ENCODE measurements at regions of chr10 and their contacts with region 1.

Region 1: DNA sequence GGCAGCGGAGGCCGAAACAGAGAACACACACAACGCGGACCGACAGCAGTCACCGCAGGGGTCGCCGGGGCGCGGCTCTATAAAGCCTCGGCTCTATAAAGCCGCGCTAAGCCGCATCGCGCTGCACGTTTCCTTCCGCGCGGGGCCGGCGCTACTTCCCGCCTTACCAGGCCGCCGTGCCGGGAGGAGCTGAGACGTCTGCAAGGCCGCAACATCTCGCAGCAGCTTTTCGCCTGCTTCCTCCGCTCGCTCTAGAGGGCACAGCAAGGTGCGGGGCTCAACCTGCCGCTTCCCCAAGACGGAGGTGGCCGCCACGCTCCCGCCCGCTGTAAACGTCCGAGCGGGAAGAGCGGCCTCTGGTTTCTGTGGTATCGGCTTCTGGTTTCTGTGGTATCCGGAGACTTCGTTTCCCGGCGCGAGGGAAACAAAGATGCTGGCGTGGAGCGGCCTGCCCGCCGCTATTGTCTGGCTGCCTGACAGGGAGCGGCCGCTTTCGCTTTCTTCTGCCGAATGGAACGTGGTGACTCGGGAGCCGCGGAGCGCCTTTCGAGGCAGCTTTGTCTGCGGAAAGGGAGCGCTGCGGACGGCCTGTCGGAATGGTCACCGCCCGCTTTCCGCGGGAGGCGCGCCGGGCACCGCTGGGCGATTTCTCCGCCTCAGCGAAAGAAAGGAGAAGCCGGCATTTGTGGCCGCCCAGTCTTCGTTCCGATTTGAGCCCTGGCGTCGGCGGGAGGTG is 91.8 kb downstream of the SPAG6 start:
- DNase-seq: peak; percentile 84 to 96 (median 90)
- ATAC-seq: peak; percentile 85
- H3K4me3 ChIP-seq: peak overlapping the region; percentile 92
- H3K4me3 Mint-ChIP-seq: peak overlapping the region; percentile 98
- H3K27ac ChIP-seq: peak overlapping the region; percentile 90 to 94
- H3K27ac Mint-ChIP-seq: peak overlapping the region; percentile 100
- H3K4me1 ChIP-seq: peaks cover 24% of the 10 kb centered on the region
- H3K4me1 Mint-ChIP-seq: peaks cover 43% of the 10 kb centered on the region
- H3K27me3 ChIP-seq: no peaks in the 10 kb centered on the region
- H3K27me3 Mint-ChIP-seq: no peaks in the 10 kb centered on the region
- CTCF ChIP-seq: peak; percentile 11

Region 2: GRCh38 chr10:21989453-21990154 is 447.4 kb before region 1 on chr10:
- CTCF ChIA-PET with region 1: no interaction called
- POLR2A ChIA-PET with region 1: interaction called, 10 read pairs
- intact Hi-C with region 1: no loop called
- DNase-seq: peak in 9 of 14 experiments; percentile 3 to 67 (median 19)
- ATAC-seq: peak; percentile 87
- H3K4me3 ChIP-seq: no peak overlapping the region
- H3K4me3 Mint-ChIP-seq: no peak overlapping the region
- H3K27ac ChIP-seq: no peak overlapping the region
- H3K27ac Mint-ChIP-seq: no peak overlapping the region
- H3K4me1 ChIP-seq: peaks cover 3% of the 10 kb centered on the region
- H3K4me1 Mint-ChIP-seq: peaks cover 10% of the 10 kb centered on the region
- H3K27me3 ChIP-seq: no peaks in the 10 kb centered on the region
- H3K27me3 Mint-ChIP-seq: no peaks in the 10 kb centered on the region
- CTCF ChIP-seq: peak; percentile 57

Region 3: GRCh38 chr10:22251751-22252223 is 185.3 kb before region 1 on chr10:
- CTCF ChIA-PET with region 1: interaction called, 3 read pairs
- POLR2A ChIA-PET with region 1: interaction called, 50 read pairs
- intact Hi-C with region 1: loop called in 1 of 2 experiments (anchors 1 kb)
- DNase-seq: peak; percentile 46 to 82 (median 66)
- ATAC-seq: peak; percentile 57
- H3K4me3 ChIP-seq: peak overlapping the region; percentile 76
- H3K4me3 Mint-ChIP-seq: peak overlapping the region; percentile 96
- H3K27ac ChIP-seq: peak overlapping the region; percentile 71 to 76
- H3K27ac Mint-ChIP-seq: peak overlapping the region; percentile 97
- H3K4me1 ChIP-seq: peaks cover 10% of the 10 kb centered on the region
- H3K4me1 Mint-ChIP-seq: peaks cover 56% of the 10 kb centered on the region
- H3K27me3 ChIP-seq: peaks cover 0 to 7% of the 10 kb centered on the region in 2 experiments
- H3K27me3 Mint-ChIP-seq: peaks cover 22% of the 10 kb centered on the region
- CTCF ChIP-seq: no peak

Region 4: GRCh38 chr10:22340362-22341189 is 96.5 kb before region 1 on chr10:
- CTCF ChIA-PET with region 1: no interaction called
- POLR2A ChIA-PET with region 1: interaction called, 26 read pairs
- intact Hi-C with region 1: loop called in 1 of 2 experiments (anchors 5 kb)
- DNase-seq: peak in 10 of 14 experiments; percentile 12 to 78 (median 49)
- ATAC-seq: peak; percentile 37
- H3K4me3 ChIP-seq: peak overlapping the region; percentile 67
- H3K4me3 Mint-ChIP-seq: peak overlapping the region; percentile 91
- H3K27ac ChIP-seq: no peak overlapping the region
- H3K27ac Mint-ChIP-seq: peak overlapping the region; percentile 89
- H3K4me1 ChIP-seq: peaks cover 38% of the 10 kb centered on the region
- H3K4me1 Mint-ChIP-seq: peaks cover 38% of the 10 kb centered on the region
- H3K27me3 ChIP-seq: peaks cover 61 to 98% of the 10 kb centered on the region in 2 experiments
- H3K27me3 Mint-ChIP-seq: peaks cover 86% of the 10 kb centered on the region
- CTCF ChIP-seq: no peak

Region 5: DNA sequence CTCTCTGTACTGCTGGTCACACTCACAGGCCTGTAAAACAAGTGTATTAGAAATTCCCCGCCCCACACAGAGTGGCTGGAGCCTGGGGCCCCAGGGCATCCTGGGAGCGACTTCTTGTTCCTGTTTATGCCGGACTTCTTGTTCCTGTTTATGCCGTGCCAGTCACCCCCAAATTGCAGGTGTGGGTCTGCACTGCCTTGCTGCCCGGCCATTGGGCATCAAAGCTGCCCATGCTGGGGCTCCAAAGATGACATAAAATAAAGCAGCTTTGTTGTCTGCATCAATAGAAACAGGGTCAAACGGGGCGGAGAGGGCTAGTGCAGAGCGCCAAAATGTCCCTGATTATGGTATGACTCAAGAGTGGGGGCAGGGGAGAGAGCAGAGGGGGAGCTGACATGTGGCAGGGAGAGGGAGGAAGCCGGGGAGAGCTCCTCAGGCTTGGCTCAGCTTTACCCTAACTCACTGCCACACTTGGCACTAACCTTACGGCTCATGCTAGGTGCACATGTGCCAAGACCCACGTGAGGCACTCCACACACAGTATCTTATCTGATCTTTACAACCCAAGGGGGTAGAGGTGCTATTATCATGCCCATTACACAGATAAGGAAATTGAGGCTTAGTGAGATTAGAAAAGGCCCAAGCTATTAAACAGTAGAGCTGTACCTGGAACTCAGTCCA is 178.9 kb after region 1 on chr10:
- CTCF ChIA-PET with region 1: no interaction called
- POLR2A ChIA-PET with region 1: interaction called, 14 read pairs
- intact Hi-C with region 1: no loop called
- DNase-seq: peak in 8 of 14 experiments; percentile 22 to 78 (median 44)
- ATAC-seq: peak; percentile 29
- H3K4me3 ChIP-seq: peak overlapping the region; percentile 31
- H3K4me3 Mint-ChIP-seq: peak overlapping the region; percentile 58
- H3K27ac ChIP-seq: peak overlapping the region in 1 of 2 donors; percentile 68
- H3K27ac Mint-ChIP-seq: peak overlapping the region; percentile 98
- H3K4me1 ChIP-seq: peaks cover 80% of the 10 kb centered on the region
- H3K4me1 Mint-ChIP-seq: peaks cover 98% of the 10 kb centered on the region
- H3K27me3 ChIP-seq: no peaks in the 10 kb centered on the region
- H3K27me3 Mint-ChIP-seq: no peaks in the 10 kb centered on the region
- CTCF ChIP-seq: no peak

Region 6: DNA sequence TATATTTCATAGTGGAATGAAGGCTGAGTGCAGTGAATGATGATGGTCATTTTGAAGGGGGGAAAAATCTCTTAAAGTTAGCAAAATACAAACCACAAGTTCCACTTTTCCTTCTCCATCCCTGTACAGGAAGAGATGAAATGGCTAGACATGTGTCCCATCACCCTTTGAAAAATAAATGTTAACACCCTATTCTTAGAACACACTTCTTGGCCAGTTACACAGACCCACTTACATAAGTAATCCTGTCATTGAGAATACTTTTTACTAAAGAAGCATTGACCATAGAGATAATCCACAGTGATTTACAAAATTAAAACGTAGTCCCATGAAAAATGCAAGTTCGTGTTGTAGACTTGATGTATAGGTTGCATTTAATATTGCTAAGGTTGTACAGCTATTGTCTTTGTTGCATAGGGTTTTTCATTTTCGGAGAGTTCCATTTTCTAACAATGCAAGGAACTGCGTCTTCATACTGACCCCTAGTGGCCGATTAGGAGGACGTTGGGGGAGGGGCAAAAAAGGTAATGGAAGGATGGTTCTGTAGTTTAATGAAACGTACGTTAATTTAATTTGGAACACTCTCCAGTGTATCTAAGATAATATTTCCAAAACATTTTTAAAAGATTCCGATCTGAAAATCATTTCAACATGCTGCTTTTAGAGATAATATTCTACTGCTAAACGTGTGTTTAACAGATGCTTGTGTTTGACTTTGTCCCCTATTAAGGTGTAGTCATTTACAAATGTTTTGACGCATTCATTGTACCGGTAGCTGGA is 551.7 kb after region 1 on chr10:
- CTCF ChIA-PET with region 1: interaction called, 4 read pairs
- POLR2A ChIA-PET with region 1: interaction called, 12 read pairs
- intact Hi-C with region 1: no loop called
- DNase-seq: peak; percentile 44 to 87 (median 62)
- ATAC-seq: peak; percentile 81
- H3K4me3 ChIP-seq: no peak overlapping the region
- H3K4me3 Mint-ChIP-seq: no peak overlapping the region
- H3K27ac ChIP-seq: no peak overlapping the region
- H3K27ac Mint-ChIP-seq: no peak overlapping the region
- H3K4me1 ChIP-seq: no peaks in the 10 kb centered on the region
- H3K4me1 Mint-ChIP-seq: peaks cover 13% of the 10 kb centered on the region
- H3K27me3 ChIP-seq: no peaks in the 10 kb centered on the region
- H3K27me3 Mint-ChIP-seq: no peaks in the 10 kb centered on the region
- CTCF ChIP-seq: peak; percentile 95

Measured in CD4-positive, alpha-beta T cell (primary cell).